Activated B cell treated with CpG ODN at 0.5 μM for 24 hours (primary cell): ENCODE measurements at regions of chr21 and their contacts with region 1.

Region 1: GRCh38 chr21:36542312-36543107 is 62.6 kb upstream of the CLDN14 start:
- DNase-seq: no peak
- ATAC-seq: peak; percentile 87
- H3K4me3 Mint-ChIP-seq: peak overlapping the region; percentile 41
- H3K27ac Mint-ChIP-seq: no peak overlapping the region
- H3K4me1 Mint-ChIP-seq: peaks cover 3% of the 10 kb centered on the region
- H3K27me3 Mint-ChIP-seq: peaks cover 11% of the 10 kb centered on the region
- CTCF ChIP-seq: no peak

Region 2: GRCh38 chr21:36419996-36420395 is 122.5 kb before region 1 on chr21:
- CTCF ChIA-PET with region 1: no interaction called
- POLR2A ChIA-PET with region 1: no interaction called
- intact Hi-C with region 1: loop called (anchors 1 kb)
- DNase-seq: peak; percentile 29
- ATAC-seq: peak; percentile 71
- H3K4me3 Mint-ChIP-seq: no peak overlapping the region
- H3K27ac Mint-ChIP-seq: no peak overlapping the region
- H3K4me1 Mint-ChIP-seq: no peaks in the 10 kb centered on the region
- H3K27me3 Mint-ChIP-seq: no peaks in the 10 kb centered on the region
- CTCF ChIP-seq: no peak

Region 3: GRCh38 chr21:36461606-36462486 is 80.7 kb before region 1 on chr21:
- CTCF ChIA-PET with region 1: no interaction called
- POLR2A ChIA-PET with region 1: no interaction called
- intact Hi-C with region 1: no loop called
- DNase-seq: no peak
- ATAC-seq: no peak
- H3K4me3 Mint-ChIP-seq: no peak overlapping the region
- H3K27ac Mint-ChIP-seq: no peak overlapping the region
- H3K4me1 Mint-ChIP-seq: no peaks in the 10 kb centered on the region
- H3K27me3 Mint-ChIP-seq: no peaks in the 10 kb centered on the region
- CTCF ChIP-seq: no peak

Region 4: DNA sequence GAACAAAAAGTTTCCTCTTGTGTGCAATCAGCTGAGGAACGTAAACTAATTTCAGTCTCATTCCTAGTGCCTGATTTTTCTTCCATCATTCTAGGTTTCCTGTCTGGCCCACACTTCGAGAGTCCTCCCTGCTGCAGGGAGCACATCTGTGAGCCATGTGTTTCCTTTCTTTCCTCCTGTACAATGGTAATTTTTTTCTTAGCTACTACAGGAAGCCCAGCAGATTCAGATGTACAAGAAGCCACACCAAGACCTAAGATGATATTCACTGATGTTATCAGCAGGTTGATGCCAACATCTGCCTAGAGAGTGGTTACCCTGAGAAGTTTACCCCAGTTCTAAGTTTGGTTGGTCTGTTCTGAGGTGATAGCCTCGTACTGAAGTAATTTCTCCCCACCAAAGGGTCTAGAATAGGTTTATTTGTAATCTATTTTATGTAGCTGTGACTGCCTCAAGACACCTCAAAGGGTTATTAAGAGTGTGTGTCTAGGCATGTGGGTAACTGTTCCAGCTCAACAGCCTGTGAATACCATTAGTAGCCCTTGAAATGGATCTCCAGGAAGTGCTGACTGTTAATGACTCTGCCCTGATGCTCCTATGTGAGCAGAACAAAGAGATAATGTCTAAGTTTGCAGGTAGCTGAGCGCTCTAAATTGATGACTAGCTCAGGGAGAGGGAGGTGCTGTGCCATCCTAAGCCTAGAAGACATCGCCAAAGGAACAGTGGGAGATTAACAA is 30.9 kb before region 1 on chr21:
- CTCF ChIA-PET with region 1: no interaction called
- POLR2A ChIA-PET with region 1: interaction called, 3 read pairs
- intact Hi-C with region 1: loop called (anchors 2 kb)
- DNase-seq: no peak
- ATAC-seq: no peak
- H3K4me3 Mint-ChIP-seq: no peak overlapping the region
- H3K27ac Mint-ChIP-seq: no peak overlapping the region
- H3K4me1 Mint-ChIP-seq: peaks cover 48% of the 10 kb centered on the region
- H3K27me3 Mint-ChIP-seq: peaks cover 2% of the 10 kb centered on the region
- CTCF ChIP-seq: no peak